AG04450 (cell line): ENCODE measurements at regions of chr12 and their contacts with region 1.

Region 1: GRCh38 chr12:64801381-64801780 is 23.1 kb upstream of the TBC1D30 start:
- DNase-seq: no peak
- H3K4me3 ChIP-seq: no peak overlapping the region
- H3K27ac ChIP-seq: no peak overlapping the region
- H3K27me3 ChIP-seq: peaks cover 14% of the 10 kb centered on the region
- CTCF ChIP-seq: peak; percentile 31

Region 2: GRCh38 chr12:64120571-64120970 is 680.8 kb before region 1 on chr12:
- CTCF ChIA-PET with region 1: no interaction called
- POLR2A ChIA-PET with region 1: no interaction called
- DNase-seq: no peak
- H3K4me3 ChIP-seq: no peak overlapping the region
- H3K27ac ChIP-seq: no peak overlapping the region
- H3K27me3 ChIP-seq: no peaks in the 10 kb centered on the region
- CTCF ChIP-seq: no peak

Region 3: DNA sequence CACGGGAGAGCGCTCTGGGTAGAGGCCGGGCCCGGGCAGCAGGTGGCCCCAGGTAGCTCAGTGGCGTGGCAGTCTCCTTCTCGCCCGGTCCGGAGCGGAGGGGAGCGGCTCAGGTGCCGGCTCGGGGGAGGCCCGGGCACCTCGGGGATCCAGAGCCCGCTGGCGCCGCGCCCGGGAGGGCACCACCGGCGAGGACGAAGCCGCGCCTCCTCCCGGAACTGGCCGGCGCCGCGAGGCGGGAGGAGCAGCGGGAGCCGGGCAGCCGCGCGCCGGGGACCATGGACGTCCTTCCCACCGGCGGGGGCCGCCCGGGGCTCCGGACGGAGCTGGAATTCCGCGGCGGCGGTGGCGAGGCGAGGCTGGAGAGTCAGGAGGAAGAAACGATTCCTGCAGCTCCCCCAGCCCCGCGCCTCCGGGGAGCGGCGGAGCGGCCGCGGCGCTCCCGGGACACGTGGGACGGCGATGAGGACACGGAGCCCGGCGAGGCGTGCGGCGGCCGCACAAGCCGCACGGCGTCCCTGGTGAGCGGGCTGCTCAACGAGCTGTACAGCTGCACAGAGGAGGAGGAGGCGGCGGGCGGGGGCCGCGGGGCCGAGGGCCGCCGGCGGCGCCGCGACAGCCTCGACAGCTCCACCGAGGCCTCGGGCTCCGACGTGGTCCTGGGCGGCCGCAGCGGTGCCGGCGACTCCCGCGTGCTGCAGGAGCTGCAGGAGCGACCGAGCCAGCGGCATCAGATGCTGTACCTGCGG is 20.7 kb before region 1 on chr12:
- CTCF ChIA-PET with region 1: interaction called, 37 read pairs
- POLR2A ChIA-PET with region 1: interaction called, 5 read pairs
- DNase-seq: no peak
- H3K4me3 ChIP-seq: peak overlapping the region; percentile 31
- H3K27ac ChIP-seq: no peak overlapping the region
- H3K27me3 ChIP-seq: peaks cover 48% of the 10 kb centered on the region
- CTCF ChIP-seq: no peak

Region 4: GRCh38 chr12:64814432-64814831 is 13.1 kb after region 1 on chr12:
- CTCF ChIA-PET with region 1: interaction called, 34 read pairs
- POLR2A ChIA-PET with region 1: interaction called, 3 read pairs
- DNase-seq: no peak
- H3K4me3 ChIP-seq: no peak overlapping the region
- H3K27ac ChIP-seq: no peak overlapping the region
- H3K27me3 ChIP-seq: peaks cover 11% of the 10 kb centered on the region
- CTCF ChIP-seq: no peak

Region 5: DNA sequence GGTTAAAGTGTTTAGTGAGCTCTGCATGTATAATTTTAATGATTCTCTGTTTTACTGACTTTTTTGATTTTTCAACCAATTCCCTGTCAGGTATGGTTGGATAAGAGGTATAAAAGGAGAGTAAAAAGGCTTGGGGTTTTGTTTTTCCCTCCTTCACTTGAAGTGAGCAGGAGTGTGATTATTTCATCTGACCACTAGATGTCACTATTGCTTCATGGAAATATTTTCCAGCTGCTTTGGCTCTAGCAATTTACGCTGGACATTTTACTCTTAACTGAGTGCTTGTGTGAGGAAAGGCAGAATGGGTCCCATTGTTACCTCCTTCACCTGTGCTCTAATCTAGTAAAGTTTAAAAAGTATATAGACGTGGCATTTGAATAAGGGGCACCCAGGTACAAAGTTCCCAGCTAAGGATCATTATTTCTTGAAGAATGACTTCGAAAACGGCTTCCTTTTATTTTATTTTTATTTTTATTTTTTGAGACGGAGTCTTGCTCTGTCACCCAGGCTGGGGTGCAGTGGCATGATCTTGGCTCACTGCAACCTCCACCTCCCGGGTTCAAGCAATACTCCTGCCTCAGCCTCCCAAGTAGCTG is 89.6 kb after region 1 on chr12:
- CTCF ChIA-PET with region 1: interaction called, 17 read pairs
- POLR2A ChIA-PET with region 1: no interaction called
- DNase-seq: no peak
- H3K4me3 ChIP-seq: no peak overlapping the region
- H3K27ac ChIP-seq: no peak overlapping the region
- H3K27me3 ChIP-seq: peaks cover 11% of the 10 kb centered on the region
- CTCF ChIP-seq: peak; percentile 70

Region 6: GRCh38 chr12:65121049-65121955 is 319.9 kb after region 1 on chr12 and contains the start of gene WIF1:
- CTCF ChIA-PET with region 1: interaction called, 19 read pairs
- POLR2A ChIA-PET with region 1: no interaction called
- DNase-seq: no peak
- H3K4me3 ChIP-seq: peak within 1 kb of the TSS; percentile 31
- H3K27ac ChIP-seq: no peak within 1 kb of the TSS
- H3K27me3 ChIP-seq: peaks cover 45% of the 10 kb centered on the region
- CTCF ChIP-seq: peak; percentile 30
- polyA plus RNA-seq, gene WIF1: not detected in 2 replicates